IMR-90 (cell line): ENCODE measurements at regions of chr2 and their contacts with region 1.

Region 1: DNA sequence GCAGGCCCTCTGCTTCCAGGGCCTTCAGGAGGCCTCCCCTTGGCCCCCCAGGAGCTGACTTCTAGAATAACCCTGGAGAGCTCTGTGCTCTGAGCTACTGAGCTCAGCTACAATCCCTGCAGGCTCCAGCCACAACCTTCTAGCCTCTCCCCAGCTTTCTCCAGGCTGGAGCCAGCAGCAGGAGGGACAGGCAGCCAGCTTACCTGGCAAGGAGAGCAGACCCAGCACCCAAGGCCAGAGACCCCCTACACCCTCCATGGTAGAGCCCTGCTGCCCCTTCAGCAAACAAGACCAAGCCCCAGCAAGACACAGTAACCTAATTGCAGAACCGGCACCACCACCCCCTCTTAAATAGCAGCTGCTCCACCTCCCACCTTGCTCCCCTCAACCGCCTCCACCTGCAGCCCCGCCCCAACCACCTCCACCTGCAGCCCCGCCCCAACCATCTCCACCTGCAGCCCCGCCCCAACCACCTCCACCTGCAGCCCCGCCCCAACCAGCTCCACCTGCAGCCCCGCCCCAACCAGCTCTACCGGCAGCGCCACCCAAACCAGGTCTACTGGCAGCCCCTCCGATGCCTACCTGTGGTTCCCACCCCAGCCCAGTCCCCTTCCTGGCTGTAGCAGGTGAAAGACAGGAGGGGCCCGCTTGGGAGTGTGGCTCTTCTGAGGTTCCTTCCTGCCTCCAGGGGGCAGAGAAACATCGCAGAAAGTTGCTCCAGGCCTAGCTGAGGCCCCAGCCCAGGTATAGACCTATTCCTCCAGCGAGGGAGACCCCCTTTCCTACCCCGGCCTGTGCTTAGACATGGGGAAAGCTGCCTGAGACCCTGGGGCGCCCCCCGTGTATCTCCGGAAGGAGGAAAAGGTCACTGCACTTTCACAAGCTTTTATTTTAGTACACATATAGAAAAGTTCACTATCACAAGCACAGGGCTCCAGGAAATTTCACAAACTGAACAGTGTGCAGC is at the start of gene ASTL:
- DNase-seq: peak; percentile 32
- ATAC-seq: peak; percentile 77; the same call in 1 of the 2 replicates
- H3K4me3 ChIP-seq: no peak within 1 kb of the TSS
- H3K27ac ChIP-seq: no peak within 1 kb of the TSS
- H3K4me1 ChIP-seq: no peaks in the 10 kb centered on the region
- H3K27me3 ChIP-seq: peaks cover 34% of the 10 kb centered on the region
- CTCF ChIP-seq: peak; percentile 63
- POLR2A ChIP-seq: peak; percentile 33
- RAD21 ChIP-seq: peak; percentile 79
- total RNA-seq, gene ASTL: not detected in 2 replicates

Region 2: GRCh38 chr2:96091533-96092334 is 46.7 kb before region 1 on chr2:
- CTCF ChIA-PET with region 1: no interaction called
- POLR2A ChIA-PET with region 1: no interaction called
- dilution Hi-C with region 1: no loop called
- in situ Hi-C with region 1: no loop called
- intact Hi-C with region 1: no loop called
- DNase-seq: no peak
- ATAC-seq: no peak
- H3K4me3 ChIP-seq: no peak overlapping the region
- H3K27ac ChIP-seq: no peak overlapping the region
- H3K4me1 ChIP-seq: no peaks in the 10 kb centered on the region
- H3K27me3 ChIP-seq: peaks cover 30% of the 10 kb centered on the region
- CTCF ChIP-seq: no peak
- POLR2A ChIP-seq: no peak
- RAD21 ChIP-seq: no peak

Region 3: DNA sequence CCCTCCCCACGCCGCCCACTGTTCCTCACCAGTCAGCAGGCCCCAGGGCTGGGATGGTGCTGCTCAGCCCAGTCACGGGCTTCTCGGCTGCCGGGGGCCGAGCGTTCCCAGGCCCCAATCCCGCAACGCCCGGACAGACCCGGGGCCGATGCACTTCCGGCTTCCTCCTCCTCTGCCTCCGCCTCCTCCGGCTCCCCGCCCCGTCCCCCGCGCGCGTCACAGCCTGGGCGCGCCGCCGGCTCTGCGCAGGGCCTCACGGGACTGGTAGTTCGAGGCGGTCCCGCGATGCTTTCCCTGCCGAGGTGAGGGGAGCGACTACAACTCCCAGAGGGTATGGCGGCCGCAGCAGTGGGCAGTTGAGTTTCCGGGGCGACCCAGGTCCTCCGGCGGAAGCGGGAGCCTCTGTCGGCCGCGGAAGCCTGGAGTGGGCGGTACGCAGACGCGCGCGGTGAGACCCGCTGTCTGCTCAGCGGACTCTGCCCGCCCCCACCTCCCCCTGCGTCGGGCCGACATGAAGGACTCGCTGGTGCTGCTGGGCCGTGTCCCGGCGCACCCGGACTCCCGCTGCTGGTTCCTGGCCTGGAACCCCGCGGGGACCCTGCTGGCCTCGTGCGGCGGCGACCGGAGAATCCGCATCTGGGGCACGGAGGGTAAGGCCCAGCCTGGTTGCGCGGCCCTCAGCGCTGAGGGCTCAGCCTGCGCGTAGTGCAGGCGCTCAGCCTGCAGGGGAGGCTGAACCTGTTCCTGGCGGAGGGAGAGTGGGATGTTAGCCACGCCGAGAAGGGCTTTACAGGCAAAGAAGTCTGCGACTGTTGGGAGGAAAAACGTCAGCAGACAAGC is 127.6 kb after region 1 on chr2 and contains the starts of genes CIAO1 and TMEM127:
- CTCF ChIA-PET with region 1: interaction called, 5 read pairs
- POLR2A ChIA-PET with region 1: no interaction called
- dilution Hi-C with region 1: no loop called
- in situ Hi-C with region 1: loop called (anchors 10 kb)
- intact Hi-C with region 1: loop called (anchors 1 kb)
- DNase-seq: peak; percentile 98
- ATAC-seq: peak; percentile 97
- H3K4me3 ChIP-seq: peak within 1 kb of the TSS; percentile 84
- H3K27ac ChIP-seq: peak within 1 kb of the TSS; percentile 82
- H3K4me1 ChIP-seq: peaks cover 5% of the 10 kb centered on the region
- H3K27me3 ChIP-seq: no peaks in the 10 kb centered on the region
- CTCF ChIP-seq: 0 out of 2 replicates have a peak, but pooled peaks have one; percentile 17
- POLR2A ChIP-seq: peak; percentile 84
- RAD21 ChIP-seq: no peak; the same call in 1 of the 2 replicates
- total RNA-seq, gene CIAO1: 85.5 and 94.3 TPM in 2 replicates
- total RNA-seq, gene TMEM127: 20.0 and 35.7 TPM in 2 replicates